ENCODE measurements at regions of chr2 and their contacts with region 1.

Region 1: DNA sequence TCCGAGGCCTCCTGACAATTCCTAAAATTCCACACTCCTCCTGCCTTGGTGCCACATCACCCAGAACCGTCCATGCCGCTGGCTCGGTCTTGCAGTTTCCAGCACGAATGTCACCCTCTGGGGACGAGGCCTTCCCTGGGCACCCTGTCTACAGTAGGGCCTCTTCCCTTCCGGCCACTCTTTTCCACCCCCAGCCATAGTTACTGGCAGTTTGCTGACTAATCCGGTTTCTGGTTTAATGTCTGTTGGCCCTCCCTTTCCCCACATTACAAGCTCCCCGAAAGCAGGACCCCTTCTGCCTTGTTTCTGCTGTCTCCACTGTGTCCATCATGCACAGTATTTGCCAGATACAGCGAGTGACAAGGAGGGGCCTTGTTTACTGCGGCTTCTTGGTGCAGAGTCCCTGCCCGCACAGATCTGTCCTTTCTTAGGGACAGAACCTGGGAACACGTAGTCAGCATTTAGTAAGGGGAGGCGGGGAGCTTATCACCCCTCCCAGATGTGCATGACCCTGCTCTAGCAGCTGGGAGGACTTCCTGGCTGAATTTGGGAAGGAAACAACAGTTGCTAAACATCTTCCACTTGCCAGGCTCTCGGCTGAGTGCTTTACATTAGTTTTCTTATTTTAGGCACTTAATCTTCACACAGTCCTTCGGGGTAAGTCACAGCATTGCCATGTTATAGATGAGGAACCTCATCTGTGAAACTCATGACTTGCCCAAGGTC is 23.6 kb upstream of the CATIP start:
- DNase-seq: no peak
- ATAC-seq: peak; percentile 78
- H3K4me3 ChIP-seq: no peak overlapping the region
- H3K27ac ChIP-seq: peak overlapping the region; percentile 21; the same call in 1 of the 2 replicates
- H3K4me1 ChIP-seq: peaks cover 7% of the 10 kb centered on the region
- H3K27me3 ChIP-seq: no peaks in the 10 kb centered on the region
- CTCF ChIP-seq: no peak
- POLR2A ChIP-seq: no peak
- RAD21 ChIP-seq: no peak

Region 2: DNA sequence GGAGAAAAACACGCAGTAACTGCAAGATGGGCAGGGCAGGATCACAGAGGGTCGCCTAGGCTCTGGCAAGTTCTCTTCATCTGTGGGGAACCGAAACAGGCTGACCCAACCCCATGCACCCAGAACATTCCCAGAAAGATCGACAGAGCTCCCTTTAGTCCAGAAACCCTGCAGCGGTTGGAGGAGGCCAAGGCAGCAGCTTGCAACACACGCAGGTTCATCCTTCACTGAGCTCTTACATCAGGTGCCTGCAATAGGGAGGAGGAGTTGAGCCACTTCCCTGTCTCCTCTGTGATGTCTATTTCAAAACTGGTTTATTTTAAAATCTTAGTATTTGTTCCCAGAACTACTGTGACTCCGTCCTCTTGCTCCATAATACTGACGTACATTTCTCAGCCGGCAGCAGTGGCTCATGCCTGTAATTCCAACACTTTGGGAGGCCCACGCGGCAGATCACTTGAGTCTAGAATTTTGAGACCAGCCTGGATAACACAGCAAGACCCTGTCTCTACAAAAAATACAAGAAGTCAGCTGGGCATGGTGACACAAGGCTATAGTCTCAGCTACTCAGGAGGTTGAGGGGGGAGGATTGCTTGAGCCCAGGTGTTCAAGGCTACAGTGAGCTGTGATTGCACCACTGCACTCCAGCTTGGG is 37.5 kb after region 1 on chr2:
- CTCF ChIA-PET with region 1: no interaction called
- POLR2A ChIA-PET with region 1: no interaction called
- dilution Hi-C with region 1: no loop called
- in situ Hi-C with region 1: no loop called
- intact Hi-C with region 1: no loop called
- DNase-seq: peak; percentile 73
- ATAC-seq: peak; percentile 61
- H3K4me3 ChIP-seq: no peak overlapping the region
- H3K27ac ChIP-seq: peak overlapping the region; percentile 51; the same call in 1 of the 2 replicates
- H3K4me1 ChIP-seq: peaks cover 5% of the 10 kb centered on the region
- H3K27me3 ChIP-seq: peaks cover 2% of the 10 kb centered on the region; the same call in 1 of the 2 replicates
- CTCF ChIP-seq: no peak
- POLR2A ChIP-seq: no peak
- RAD21 ChIP-seq: no peak

Region 3: GRCh38 chr2:218501665-218502064 is 168.6 kb after region 1 on chr2:
- CTCF ChIA-PET with region 1: no interaction called
- POLR2A ChIA-PET with region 1: no interaction called
- dilution Hi-C with region 1: no loop called
- in situ Hi-C with region 1: no loop called
- intact Hi-C with region 1: no loop called
- DNase-seq: peak; percentile 65
- ATAC-seq: peak; percentile 92
- H3K4me3 ChIP-seq: no peak overlapping the region
- H3K27ac ChIP-seq: no peak overlapping the region
- H3K4me1 ChIP-seq: no peaks in the 10 kb centered on the region
- H3K27me3 ChIP-seq: no peaks in the 10 kb centered on the region
- CTCF ChIP-seq: no peak
- POLR2A ChIP-seq: no peak
- RAD21 ChIP-seq: no peak

Region 4: DNA sequence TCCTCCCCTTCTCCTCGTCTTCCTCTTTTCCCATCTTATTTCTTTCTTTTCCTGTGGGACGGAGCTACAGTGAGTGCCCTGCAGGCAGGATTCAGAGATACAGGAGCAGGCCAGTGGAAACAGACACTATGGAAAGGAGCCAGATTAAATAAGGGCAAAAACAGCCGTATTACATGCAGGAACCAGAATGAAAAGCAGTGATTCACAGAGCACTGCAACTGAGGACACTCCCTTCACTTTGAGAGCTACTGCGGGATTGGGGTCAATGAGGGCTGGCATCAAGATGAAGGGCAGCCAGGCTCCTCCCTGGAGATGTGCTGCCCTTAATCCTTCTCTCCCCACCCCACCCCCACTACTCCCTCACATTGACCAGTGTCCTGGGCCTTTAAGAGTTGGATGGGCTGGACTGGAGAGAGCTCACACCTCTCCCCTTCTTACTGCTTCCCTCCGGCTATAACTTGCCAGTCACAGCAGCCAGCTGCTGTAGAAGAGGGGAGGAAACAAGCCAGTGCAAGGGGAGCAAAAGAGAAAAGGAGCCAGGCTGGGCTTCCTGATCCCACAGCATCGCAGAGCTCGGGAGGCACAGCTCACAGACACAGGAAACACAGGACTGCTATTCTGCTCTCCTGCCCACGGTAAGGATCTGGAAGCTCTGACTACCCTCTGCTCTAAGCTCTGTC is 274.5 kb after region 1 on chr2 and contains the start of gene PLCD4:
- CTCF ChIA-PET with region 1: no interaction called
- POLR2A ChIA-PET with region 1: interaction called, 19 read pairs
- dilution Hi-C with region 1: no loop called
- in situ Hi-C with region 1: no loop called
- intact Hi-C with region 1: no loop called
- DNase-seq: peak; percentile 80
- ATAC-seq: peak; percentile 89
- H3K4me3 ChIP-seq: peak within 1 kb of the TSS; percentile 16
- H3K27ac ChIP-seq: peak within 1 kb of the TSS; percentile 35; the same call in 1 of the 2 replicates
- H3K4me1 ChIP-seq: peaks cover 8% of the 10 kb centered on the region
- H3K27me3 ChIP-seq: no peaks in the 10 kb centered on the region; the same call in 1 of the 2 replicates
- CTCF ChIP-seq: 0 out of 2 replicates have a peak, but pooled peaks have one; percentile 12
- POLR2A ChIP-seq: no peak
- RAD21 ChIP-seq: no peak
- total RNA-seq, gene PLCD4: 1.4 and 2.0 TPM in 2 replicates

Measured in IMR-90 (cell line).